PC-3 (cell line): ENCODE measurements at regions of chr4 and their contacts with region 1.

Region 1: DNA sequence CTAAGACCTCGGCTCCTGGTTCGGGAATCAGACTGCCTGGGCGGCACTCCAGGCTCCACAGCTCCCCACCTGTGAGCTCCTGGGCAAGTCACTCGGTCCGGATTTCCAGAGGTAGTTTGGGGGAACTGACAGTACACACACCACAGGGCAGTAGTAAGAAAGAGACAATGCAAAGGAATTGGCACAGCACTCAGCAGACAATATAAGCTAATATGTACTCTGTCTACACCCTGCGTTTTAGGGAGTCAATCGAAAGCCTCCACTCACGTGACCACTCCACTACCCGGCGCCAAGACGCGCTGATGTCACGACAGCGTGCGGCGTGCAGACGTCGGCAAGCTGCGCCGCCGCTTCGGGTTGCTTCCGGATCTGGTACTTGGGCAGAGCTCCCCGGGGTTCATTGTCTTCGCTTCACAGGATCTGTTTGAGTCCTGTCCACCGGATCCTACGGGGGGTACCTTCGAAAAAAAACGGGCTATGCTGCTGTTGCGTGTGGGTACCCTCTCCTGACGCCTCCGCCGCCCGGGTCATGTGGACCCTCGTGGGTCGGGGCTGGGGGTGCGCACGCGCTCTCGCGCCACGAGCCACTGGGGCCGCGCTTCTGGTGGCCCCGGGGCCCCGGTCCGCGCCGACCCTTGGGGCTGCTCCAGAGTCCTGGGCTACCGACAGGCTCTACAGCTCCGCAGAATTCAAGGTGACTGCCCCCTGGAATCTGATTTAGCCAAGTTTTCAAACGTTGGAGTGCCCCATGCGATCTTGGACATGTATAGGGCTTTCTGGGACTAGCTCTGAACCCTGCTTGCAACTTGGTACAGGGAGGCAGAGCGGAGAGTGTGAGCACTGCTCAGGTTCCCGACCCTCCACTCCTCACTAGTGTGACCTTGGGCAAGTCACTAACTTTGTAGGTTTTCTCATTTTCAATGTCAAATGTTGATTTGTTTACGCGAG is at the start of gene GUF1:
- DNase-seq: peak; percentile 86
- ATAC-seq: peak; percentile 92
- H3K4me3 ChIP-seq: peak within 1 kb of the TSS; percentile 98
- H3K27ac ChIP-seq: peak within 1 kb of the TSS; percentile 55
- H3K4me1 ChIP-seq: peaks cover 9% of the 10 kb centered on the region
- H3K27me3 ChIP-seq: no peaks in the 10 kb centered on the region
- CTCF ChIP-seq: no peak
- total RNA-seq, gene GUF1: 12.8 and 13.7 TPM in 2 replicates

Region 2: GRCh38 chr4:44532851-44533250 is 145.5 kb before region 1 on chr4:
- CTCF ChIA-PET with region 1: no interaction called
- POLR2A ChIA-PET with region 1: no interaction called
- intact Hi-C with region 1: no loop called
- DNase-seq: no peak
- ATAC-seq: no peak
- H3K4me3 ChIP-seq: no peak overlapping the region
- H3K27ac ChIP-seq: no peak overlapping the region
- H3K4me1 ChIP-seq: no peaks in the 10 kb centered on the region
- H3K27me3 ChIP-seq: no peaks in the 10 kb centered on the region
- CTCF ChIP-seq: no peak

Region 3: DNA sequence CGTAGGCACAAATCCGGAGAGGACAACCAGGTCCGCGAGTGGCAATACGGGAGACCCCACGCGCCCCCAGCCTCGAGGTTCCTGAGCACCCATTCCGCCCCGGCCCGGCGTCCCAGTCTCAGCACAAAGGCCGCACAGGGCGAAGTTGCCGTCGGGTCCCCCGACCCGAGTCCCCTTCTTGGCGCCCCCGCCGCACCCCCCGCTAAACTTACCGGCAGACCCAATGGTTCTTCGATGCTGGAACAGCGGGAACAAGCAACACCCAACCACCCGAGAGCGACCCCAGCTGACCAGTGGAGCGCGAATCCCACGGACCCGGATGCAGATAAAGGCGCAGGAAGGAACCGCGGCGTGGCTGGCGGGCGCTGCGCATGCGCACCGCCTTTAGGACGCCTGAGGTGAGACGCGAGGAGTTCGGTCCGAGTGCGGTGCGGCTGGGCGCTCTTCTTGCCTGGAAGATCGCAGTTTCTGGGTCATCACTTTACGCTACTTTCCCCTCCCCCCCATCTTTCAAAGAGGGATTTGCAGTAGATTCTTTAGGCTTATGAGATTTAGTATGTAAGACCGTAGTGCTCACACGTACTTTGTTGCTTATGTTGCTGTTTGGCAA is 48.0 kb after region 1 on chr4 and contains the start of gene GNPDA2:
- CTCF ChIA-PET with region 1: no interaction called
- POLR2A ChIA-PET with region 1: no interaction called
- intact Hi-C with region 1: loop called (anchors 1 kb)
- DNase-seq: peak; percentile 85
- ATAC-seq: peak; percentile 91
- H3K4me3 ChIP-seq: peak within 1 kb of the TSS; percentile 79
- H3K27ac ChIP-seq: peak within 1 kb of the TSS; percentile 30
- H3K4me1 ChIP-seq: peaks cover 12% of the 10 kb centered on the region
- H3K27me3 ChIP-seq: no peaks in the 10 kb centered on the region
- CTCF ChIP-seq: 0 out of 2 replicates have a peak, but pooled peaks have one; percentile 24
- total RNA-seq, gene GNPDA2: 17.2 and 21.9 TPM in 2 replicates